Activated CD8-positive, alpha-beta T cell treated with anti-CD3 and anti-CD28 coated beads for 36 hours (primary cell): ENCODE measurements at regions of chr1 and their contacts with region 1.

Region 1: GRCh38 chr1:156338180-156338973 is at the starts of genes CCT3 and TSACC:
- DNase-seq: peak; percentile 99
- ATAC-seq: peak; percentile 95
- H3K4me3 Mint-ChIP-seq: peak within 1 kb of the TSS; percentile 98
- H3K27ac Mint-ChIP-seq: peak within 1 kb of the TSS; percentile 99
- H3K4me1 Mint-ChIP-seq: peaks cover 27% of the 10 kb centered on the region
- H3K27me3 Mint-ChIP-seq: no peaks in the 10 kb centered on the region
- CTCF ChIP-seq: no peak
- total RNA-seq, gene CCT3: 379 to 388 TPM
- total RNA-seq, gene TSACC: 0.72 TPM in 1 of 2 experiments, not detected in the other

Region 2: GRCh38 chr1:156319664-156320063 is 18.7 kb before region 1 on chr1:
- CTCF ChIA-PET with region 1: interaction called, 13 read pairs
- POLR2A ChIA-PET with region 1: interaction called, 9 read pairs
- intact Hi-C with region 1: no loop called
- DNase-seq: peak; percentile 39
- ATAC-seq: no peak
- H3K4me3 Mint-ChIP-seq: no peak overlapping the region
- H3K27ac Mint-ChIP-seq: no peak overlapping the region
- H3K4me1 Mint-ChIP-seq: no peaks in the 10 kb centered on the region
- H3K27me3 Mint-ChIP-seq: no peaks in the 10 kb centered on the region
- CTCF ChIP-seq: peak; percentile 47